ENCODE measurements at regions of chr15 and their contacts with region 1.

Region 1: DNA sequence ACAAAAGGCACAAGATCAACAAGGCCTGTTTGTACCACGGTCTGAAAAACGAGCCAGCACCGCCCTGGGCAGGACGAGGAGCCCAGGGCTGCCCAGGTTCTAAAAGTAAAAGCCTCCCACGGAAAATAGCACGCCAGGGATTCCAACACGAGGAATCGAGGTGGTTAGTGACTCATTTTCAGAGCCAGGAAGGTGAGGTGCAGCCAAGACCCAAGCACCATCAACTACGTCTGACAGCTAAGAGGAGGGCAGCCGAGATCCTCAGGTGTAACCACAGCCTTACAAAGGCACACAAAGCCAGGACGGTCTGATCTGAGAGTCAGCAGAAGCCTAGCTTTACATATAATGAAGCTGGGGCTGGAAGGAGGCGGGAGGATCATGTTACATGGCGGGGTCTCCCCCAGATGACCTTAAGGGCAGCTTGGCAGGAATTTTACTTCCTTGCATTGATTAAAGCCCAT is 52.5 kb downstream of the ATP10A start:
- DNase-seq: peak; percentile 50
- H3K4me3 Mint-ChIP-seq: peak overlapping the region; percentile 9
- H3K27ac Mint-ChIP-seq: peak overlapping the region; percentile 82
- H3K4me1 Mint-ChIP-seq: peaks cover 73% of the 10 kb centered on the region
- H3K27me3 Mint-ChIP-seq: no peaks in the 10 kb centered on the region

Region 2: DNA sequence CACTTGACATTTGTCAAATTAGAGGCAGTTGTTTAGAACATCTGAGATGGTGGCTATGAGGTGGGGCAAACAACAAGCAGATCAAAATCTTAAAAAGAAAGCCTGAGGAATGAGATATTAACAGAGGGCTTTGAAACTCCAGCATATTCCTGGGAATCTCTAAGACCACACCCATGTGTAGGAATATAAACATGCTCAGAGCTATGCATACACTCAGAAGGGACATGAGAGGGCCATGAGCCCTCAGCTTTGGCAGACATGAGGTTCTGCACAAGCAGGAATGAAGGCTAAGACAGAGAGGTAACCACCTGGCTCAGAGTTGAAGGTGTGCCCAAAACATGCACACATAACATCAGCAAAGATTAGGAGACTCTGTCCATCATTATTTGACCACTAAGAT is 14.5 kb after region 1 on chr15:
- CTCF ChIA-PET with region 1: no interaction called
- intact Hi-C with region 1: loop called (anchors 1 kb)
- DNase-seq: no peak
- H3K4me3 Mint-ChIP-seq: no peak overlapping the region
- H3K27ac Mint-ChIP-seq: no peak overlapping the region
- H3K4me1 Mint-ChIP-seq: peaks cover 57% of the 10 kb centered on the region
- H3K27me3 Mint-ChIP-seq: no peaks in the 10 kb centered on the region

Region 3: GRCh38 chr15:25830844-25831451 is 20.3 kb after region 1 on chr15:
- CTCF ChIA-PET with region 1: interaction called, 4 read pairs
- intact Hi-C with region 1: loop called (anchors 2 kb)
- DNase-seq: no peak
- H3K4me3 Mint-ChIP-seq: no peak overlapping the region
- H3K27ac Mint-ChIP-seq: no peak overlapping the region
- H3K4me1 Mint-ChIP-seq: peaks cover 37% of the 10 kb centered on the region
- H3K27me3 Mint-ChIP-seq: no peaks in the 10 kb centered on the region

Measured in activated naive CD4-positive, alpha-beta T cell treated with anti-CD3 and anti-CD28 coated beads for 36 hours (primary cell).